ENCODE measurements at regions of chr16 and their contacts with region 1.

Region 1: GRCh38 chr16:75379911-75380847 is 53.1 kb downstream of the CFDP1 start:
- DNase-seq: no peak
- ATAC-seq: no peak
- H3K4me3 ChIP-seq: no peak overlapping the region
- H3K27ac ChIP-seq: no peak overlapping the region
- H3K4me1 ChIP-seq: peaks cover 6% of the 10 kb centered on the region
- H3K27me3 ChIP-seq: no peaks in the 10 kb centered on the region
- CTCF ChIP-seq: no peak

Region 2: DNA sequence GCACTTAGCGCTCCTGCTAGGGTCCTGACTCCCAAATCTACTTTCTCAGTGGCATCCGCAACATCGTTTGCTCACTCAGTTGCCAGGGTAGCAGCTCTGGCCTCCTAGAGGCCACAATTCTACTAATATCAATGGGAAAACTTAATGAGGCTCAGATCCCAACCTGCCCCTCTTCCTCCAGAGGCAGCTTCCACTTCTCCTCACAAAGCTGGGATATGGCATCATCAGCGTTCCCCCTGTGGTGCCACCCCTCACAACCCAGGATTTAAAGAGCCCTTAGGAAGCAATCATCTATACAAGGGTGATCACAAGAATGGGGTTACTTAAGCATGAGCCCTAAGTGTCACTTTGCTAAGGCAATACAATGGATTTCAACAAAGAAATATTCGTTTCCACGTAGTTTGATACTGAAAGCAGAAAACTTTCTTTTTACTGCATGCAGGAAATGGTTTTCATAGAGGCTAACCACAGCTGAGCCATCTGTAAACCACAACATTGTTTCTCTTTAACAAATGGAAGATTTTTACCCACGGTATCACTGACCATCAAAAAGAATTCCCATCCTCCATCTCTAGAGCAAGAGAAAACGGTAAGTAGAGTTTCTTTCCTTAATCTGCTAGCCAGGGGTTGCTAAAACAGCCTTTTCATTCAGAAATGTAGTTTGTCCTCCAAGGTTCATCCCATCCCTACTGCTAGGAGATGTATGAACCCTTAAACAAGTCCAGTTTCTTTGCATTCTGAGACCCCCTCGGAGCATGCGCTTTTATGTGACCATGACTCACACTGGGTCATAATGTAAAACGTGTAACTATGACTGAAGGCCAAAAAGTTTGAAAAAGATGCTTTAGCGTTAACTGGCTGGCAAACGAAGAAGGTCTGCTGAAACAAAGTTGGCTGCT is 60.4 kb before region 1 on chr16:
- intact Hi-C with region 1: loop called in 1 of 2 experiments (anchors 10 kb)
- DNase-seq: no peak
- ATAC-seq: no peak
- H3K4me3 ChIP-seq: no peak overlapping the region
- H3K27ac ChIP-seq: no peak overlapping the region
- H3K4me1 ChIP-seq: no peaks in the 10 kb centered on the region
- H3K27me3 ChIP-seq: no peaks in the 10 kb centered on the region
- CTCF ChIP-seq: no peak

Measured in psoas muscle (tissue), 8 donors.